Activated CD4-positive, alpha-beta memory T cell treated with anti-CD3 and anti-CD28 coated beads for 36 hours (primary cell): ENCODE measurements at regions of chr5 and their contacts with region 1.

Region 1: DNA sequence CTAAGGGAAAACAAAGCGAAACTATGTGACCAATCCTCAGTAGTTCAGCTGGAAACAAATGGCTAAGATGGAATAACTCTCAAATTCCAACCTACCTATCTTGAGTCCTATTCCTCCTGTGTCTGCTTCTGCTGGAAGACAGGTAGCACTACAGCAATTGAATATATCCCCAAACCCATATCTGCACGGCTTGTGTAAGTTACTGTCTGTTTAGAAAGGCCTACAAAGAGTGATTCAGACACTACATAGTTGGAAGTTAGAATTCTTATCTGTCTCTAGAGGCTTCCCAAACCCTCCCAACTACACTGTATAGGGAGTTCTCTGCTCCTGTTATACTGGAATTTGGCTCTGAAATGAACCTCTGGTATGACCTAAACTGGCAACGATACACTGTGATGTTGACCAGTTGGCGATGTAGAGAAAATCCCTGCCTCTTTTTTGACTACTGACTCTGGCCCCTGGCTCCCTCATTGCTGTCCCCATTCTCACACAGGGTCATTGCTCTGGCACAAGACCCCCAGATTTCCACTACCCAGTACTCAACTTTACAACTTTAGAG is 22.6 kb upstream of the NADK2 start:
- DNase-seq: no peak
- H3K4me3 Mint-ChIP-seq: no peak overlapping the region
- H3K27ac Mint-ChIP-seq: no peak overlapping the region
- H3K4me1 Mint-ChIP-seq: no peaks in the 10 kb centered on the region
- H3K27me3 Mint-ChIP-seq: peaks cover 15% of the 10 kb centered on the region

Region 2: DNA sequence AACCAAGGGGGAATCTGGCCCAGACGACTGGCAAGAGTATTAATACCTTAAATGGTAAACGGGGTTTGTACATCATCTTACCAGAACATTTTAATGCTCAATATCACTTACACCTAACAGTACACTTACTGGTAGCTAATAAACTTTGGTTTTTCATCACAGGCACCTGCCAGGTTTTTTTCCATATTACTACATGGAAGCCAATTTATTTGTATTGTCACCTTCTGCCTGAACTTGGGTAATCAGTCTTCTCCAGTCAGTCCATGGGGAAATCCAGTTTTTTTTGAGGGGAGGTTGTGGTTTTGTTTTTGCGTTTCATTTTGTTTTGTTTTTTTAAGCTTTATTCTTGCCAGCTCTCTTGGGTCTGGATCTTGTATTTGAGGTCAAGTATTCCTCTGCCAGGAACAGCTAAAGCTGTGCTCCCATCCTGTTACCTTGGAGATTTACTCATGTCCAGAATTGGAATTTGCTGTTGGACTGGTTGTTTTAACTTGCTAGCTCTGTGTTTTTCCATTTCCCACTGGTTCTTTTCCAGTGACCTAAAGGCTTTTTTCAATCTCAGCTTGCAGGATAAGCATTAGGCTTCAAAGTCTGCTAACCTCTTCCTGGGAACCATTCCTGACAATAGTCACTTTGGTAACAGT is 11.4 kb before region 1 on chr5:
- CTCF ChIA-PET with region 1: interaction called, 15 read pairs
- POLR2A ChIA-PET with region 1: no interaction called
- intact Hi-C with region 1: no loop called
- DNase-seq: no peak
- H3K4me3 Mint-ChIP-seq: no peak overlapping the region
- H3K27ac Mint-ChIP-seq: no peak overlapping the region
- H3K4me1 Mint-ChIP-seq: no peaks in the 10 kb centered on the region
- H3K27me3 Mint-ChIP-seq: peaks cover 6% of the 10 kb centered on the region

Region 3: GRCh38 chr5:36279054-36279698 is 14.9 kb after region 1 on chr5:
- CTCF ChIA-PET with region 1: interaction called, 15 read pairs
- POLR2A ChIA-PET with region 1: no interaction called
- intact Hi-C with region 1: no loop called
- DNase-seq: no peak
- H3K4me3 Mint-ChIP-seq: no peak overlapping the region
- H3K27ac Mint-ChIP-seq: no peak overlapping the region
- H3K4me1 Mint-ChIP-seq: peaks cover 3% of the 10 kb centered on the region
- H3K27me3 Mint-ChIP-seq: peaks cover 5% of the 10 kb centered on the region

Region 4: DNA sequence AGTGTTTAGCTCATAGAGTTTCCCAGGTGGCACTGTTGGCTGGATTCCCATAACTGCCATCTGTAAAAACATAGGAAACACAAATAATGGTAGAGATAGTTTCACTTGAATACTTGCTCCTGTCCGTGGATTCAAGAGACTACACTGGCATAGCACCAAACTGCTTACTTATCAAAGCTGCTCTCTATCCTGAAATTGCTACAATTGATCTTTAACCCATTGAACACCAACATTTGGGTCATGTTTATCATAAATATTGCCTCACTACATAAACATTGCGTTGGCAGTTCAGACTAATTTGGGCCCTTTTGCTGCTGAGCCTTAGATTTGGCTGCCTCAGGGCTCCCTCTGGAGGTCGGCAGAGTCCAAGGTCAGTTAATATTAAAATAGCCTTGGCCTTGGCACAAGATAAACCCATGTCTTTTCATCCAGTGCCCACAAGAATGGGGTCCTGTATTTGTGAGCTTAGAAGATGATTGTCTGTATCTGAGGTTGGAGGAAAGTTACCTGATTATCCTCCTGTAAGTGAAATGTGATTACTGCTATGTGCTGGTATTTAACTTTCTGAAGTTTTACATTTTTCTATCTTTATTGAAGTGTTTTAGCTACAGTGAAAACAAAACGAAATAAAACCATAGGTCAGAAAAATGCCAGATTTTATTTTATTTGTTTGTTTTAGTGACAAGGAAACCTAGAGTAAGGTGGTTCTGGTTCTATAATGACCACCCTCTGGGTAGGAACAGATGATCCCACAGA is 41.5 kb after region 1 on chr5:
- CTCF ChIA-PET with region 1: interaction called, 17 read pairs
- POLR2A ChIA-PET with region 1: no interaction called
- intact Hi-C with region 1: loop called (anchors 1 kb)
- DNase-seq: peak; percentile 32
- H3K4me3 Mint-ChIP-seq: no peak overlapping the region
- H3K27ac Mint-ChIP-seq: no peak overlapping the region
- H3K4me1 Mint-ChIP-seq: peaks cover 5% of the 10 kb centered on the region
- H3K27me3 Mint-ChIP-seq: peaks cover 2% of the 10 kb centered on the region

Region 5: DNA sequence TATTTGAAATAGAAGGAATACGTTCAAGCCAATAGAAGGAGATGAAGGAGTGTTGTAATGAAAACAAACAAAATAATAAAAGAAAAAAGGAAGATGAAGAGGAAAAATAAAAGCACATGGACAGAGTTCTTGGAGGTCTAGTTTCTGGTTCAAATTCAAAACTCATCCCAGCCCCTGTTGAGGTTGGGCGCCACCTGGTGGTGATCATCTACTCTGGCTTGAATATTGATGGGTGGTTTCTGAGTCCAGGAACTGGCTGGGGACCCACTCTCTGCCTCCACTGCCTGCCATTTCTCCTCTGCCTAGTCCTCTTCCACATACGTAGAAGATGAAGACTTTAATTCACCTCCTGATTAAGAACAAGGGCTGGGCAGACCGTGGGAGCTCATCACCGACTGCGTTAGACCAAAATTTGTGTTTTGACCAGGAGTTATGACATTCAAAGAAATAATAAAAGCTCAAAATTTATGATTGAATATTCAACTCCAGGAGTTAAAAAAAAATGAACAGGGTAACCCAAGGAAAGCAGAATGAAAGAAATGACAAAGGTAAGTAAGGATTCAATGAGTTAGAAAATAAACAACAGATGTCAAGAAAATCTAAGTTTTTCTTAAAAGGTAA is 243.2 kb after region 1 on chr5:
- CTCF ChIA-PET with region 1: interaction called, 25 read pairs
- POLR2A ChIA-PET with region 1: no interaction called
- intact Hi-C with region 1: loop called (anchors 1 kb)
- DNase-seq: peak; percentile 78
- H3K4me3 Mint-ChIP-seq: no peak overlapping the region
- H3K27ac Mint-ChIP-seq: no peak overlapping the region
- H3K4me1 Mint-ChIP-seq: no peaks in the 10 kb centered on the region
- H3K27me3 Mint-ChIP-seq: no peaks in the 10 kb centered on the region

Region 6: DNA sequence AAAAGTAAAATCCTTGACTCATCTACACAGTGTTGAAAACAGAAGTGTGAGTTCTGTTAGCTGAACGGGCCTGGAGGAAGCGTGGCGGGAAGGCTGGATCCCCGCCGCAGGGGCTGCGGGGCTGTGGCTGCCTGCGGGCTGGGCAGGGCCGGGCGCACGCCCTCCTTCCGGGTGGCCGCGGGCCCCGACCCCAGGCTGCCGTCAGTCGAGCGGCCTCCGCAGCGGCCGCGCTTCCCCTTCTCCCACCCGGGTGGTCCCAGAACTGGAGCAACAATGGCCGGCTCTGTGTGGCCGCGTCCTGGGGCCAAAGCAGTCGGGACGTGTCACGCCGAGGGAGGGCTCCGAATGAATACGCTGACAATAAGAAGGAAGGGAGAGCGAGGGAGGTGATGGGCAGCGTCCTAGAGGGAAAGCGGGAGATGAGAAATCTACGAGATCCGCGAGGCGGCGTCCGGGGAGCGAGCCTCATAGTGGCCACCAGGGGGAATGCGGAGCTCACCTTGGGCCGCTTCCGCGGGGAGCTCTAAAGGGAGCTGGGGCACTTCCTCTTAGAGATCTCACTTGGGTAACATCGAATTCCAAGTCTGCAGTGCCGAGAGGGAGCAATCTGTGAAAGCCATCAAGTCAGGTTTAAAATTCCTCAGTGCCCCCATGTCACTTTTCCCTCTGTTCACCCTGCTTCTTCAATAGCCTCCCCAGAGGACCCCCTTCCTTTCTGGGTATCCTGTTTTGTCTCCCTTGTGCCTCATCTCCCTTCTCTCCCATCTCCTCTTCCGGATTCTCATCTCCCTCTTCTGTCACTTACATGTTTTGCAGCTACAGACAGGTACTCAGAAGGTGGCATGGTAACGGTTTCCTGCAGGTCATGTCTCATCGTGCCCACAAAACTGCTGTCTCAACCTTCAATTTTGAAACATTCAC is 426.0 kb after region 1 on chr5:
- CTCF ChIA-PET with region 1: interaction called, 23 read pairs
- POLR2A ChIA-PET with region 1: no interaction called
- intact Hi-C with region 1: loop called (anchors 2 kb)
- DNase-seq: peak; percentile 77
- H3K4me3 Mint-ChIP-seq: peak overlapping the region; percentile 67
- H3K27ac Mint-ChIP-seq: no peak overlapping the region
- H3K4me1 Mint-ChIP-seq: peaks cover 13% of the 10 kb centered on the region
- H3K27me3 Mint-ChIP-seq: peaks cover 20% of the 10 kb centered on the region

Region 7: DNA sequence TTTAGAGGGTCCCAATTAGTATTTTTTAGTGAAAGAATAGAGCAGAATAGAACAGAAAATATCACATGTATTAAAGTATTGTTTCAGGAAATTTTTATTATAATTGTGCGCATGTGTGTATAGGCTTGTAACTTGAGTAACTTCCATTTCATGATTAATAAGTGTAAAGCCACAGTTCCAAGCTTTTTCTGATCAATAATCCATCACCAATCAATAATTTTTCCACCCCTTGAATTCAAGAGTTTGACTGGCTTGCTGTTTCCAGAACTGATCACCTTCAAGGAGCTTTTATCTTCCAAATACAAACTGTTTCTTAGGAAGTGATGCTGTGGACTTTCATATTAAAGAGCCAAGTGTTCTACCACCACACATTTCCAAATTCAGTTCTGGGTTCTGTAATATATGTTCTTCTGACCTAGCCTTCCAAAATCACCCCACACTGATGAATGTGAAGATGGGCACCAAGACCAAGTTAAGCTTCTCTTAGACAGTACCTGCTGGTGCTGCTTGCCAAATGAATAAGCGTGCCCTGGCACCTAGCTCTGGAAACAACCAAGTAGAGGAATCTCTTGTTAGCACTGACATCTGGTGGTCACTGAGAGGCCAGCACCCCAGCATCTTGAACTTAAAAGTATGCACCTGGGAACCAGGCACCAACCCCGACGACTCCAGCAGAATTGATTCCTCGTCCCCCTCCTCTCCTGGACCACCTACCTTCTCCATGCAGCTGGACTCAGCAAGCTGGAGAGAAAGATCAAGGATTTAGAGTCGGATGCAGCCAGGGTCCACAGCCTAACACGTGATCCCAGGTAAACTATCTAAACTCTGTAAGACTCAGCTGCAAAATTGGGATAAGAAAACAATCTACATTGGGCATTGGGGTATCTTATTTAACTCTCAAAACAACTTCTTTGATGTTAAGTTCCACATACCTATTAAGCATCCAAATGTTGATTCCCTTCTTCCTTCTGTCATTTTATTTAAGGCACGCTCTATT is 431.7 kb after region 1 on chr5:
- CTCF ChIA-PET with region 1: interaction called, 23 read pairs
- POLR2A ChIA-PET with region 1: no interaction called
- intact Hi-C with region 1: loop called (anchors 1 kb)
- DNase-seq: peak; percentile 56
- H3K4me3 Mint-ChIP-seq: no peak overlapping the region
- H3K27ac Mint-ChIP-seq: no peak overlapping the region
- H3K4me1 Mint-ChIP-seq: no peaks in the 10 kb centered on the region
- H3K27me3 Mint-ChIP-seq: peaks cover 22% of the 10 kb centered on the region